Gastrocnemius medialis (tissue), 4 donors: ENCODE measurements at regions of chr6 and their contacts with region 1.

Region 1: DNA sequence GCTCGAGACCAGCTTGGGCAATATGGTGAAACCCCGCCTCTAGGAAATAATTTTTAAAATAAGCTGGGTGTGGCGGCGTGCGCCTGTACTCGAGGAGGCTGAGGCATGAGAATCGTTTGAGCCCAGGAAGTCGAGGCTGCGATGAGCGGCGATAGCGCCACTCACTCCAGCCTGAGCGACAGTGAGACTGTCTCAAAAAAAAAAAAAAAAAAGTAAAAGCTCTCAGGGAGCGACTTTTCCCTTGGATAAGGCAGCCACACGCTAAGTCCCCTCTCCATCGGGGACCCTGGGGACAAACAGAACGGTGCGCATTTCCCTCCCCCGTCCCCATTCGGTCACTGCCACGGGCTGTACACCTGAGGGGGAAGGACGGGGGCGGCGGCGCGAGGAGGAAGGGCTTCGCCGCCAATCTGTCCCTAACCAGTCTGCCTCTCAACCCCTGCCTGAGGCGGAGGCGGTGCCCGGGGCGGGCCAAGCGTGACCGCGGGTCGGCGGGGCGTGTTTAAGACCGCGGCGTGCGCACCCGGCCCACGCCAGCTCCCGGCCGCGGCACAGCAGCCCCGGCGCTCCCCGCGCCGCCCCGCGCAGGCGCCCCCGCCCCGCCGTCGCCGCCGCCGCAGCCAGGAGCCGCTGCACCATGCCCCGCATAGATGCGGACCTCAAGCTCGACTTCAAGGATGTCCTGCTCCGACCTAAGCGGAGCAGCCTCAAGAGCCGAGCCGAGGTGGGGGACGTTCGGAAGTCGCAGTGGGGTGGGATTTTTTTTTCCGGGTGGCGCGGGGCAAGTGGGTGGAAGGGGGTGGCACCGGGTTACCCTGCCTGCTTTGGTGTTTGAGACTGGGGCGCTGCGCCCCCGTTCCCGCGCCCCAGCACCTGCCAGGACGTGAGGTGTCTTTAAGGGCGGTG is at the start of gene GMPR:
- DNase-seq: peak; percentile 81 to 91
- ATAC-seq: peak; percentile 28 to 39
- H3K4me3 ChIP-seq: peak within 1 kb of the TSS; percentile 71 to 88 (median 81)
- H3K27ac ChIP-seq: peak within 1 kb of the TSS; percentile 97 to 99 (median 98)
- H3K4me1 ChIP-seq: peaks cover 46 to 49% of the 10 kb centered on the region in 2 donors
- H3K27me3 ChIP-seq: no peaks in the 10 kb centered on the region
- CTCF ChIP-seq: peak in 2 of 5 experiments; percentile 22 to 32
- POLR2A ChIP-seq: peak; percentile 79 to 87
- total RNA-seq, gene GMPR: 109 to 266 (median 239) TPM

Region 2: DNA sequence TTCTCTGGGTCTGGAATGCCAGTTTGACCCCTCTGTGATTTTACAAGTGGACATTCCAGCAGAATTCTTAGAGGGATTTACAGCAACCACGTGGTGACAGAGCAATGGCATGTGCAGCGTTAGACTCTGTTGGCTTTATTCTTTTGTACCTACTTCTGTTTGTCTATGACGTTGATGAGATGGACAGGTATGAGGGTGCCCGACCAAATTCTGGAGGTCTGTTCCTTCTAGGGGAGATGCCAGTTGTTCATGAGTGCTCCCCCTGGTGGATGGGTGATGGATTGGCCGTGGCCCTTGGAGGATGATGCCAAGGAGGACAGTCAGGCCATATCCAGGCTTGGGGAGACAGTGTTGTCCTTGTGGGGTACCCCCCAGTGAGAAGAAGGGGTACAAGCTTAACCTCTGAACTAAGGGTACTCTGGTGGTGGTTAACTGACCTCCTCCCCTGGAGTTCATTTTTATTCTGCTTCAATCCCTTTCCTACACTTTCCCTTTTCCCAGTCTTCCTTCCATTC is 774.0 kb before region 1 on chr6:
- in situ Hi-C with region 1: no loop called
- intact Hi-C with region 1: no loop called
- DNase-seq: peak in 1 of 2 donors; percentile 46
- ATAC-seq: peak in 1 of 2 donors; percentile 34
- H3K4me3 ChIP-seq: no peak overlapping the region
- H3K27ac ChIP-seq: no peak overlapping the region
- H3K4me1 ChIP-seq: peaks cover 45 to 49% of the 10 kb centered on the region in 2 donors
- H3K27me3 ChIP-seq: no peaks in the 10 kb centered on the region
- CTCF ChIP-seq: peak; percentile 34 to 74 (median 65)
- POLR2A ChIP-seq: no peak

Region 3: DNA sequence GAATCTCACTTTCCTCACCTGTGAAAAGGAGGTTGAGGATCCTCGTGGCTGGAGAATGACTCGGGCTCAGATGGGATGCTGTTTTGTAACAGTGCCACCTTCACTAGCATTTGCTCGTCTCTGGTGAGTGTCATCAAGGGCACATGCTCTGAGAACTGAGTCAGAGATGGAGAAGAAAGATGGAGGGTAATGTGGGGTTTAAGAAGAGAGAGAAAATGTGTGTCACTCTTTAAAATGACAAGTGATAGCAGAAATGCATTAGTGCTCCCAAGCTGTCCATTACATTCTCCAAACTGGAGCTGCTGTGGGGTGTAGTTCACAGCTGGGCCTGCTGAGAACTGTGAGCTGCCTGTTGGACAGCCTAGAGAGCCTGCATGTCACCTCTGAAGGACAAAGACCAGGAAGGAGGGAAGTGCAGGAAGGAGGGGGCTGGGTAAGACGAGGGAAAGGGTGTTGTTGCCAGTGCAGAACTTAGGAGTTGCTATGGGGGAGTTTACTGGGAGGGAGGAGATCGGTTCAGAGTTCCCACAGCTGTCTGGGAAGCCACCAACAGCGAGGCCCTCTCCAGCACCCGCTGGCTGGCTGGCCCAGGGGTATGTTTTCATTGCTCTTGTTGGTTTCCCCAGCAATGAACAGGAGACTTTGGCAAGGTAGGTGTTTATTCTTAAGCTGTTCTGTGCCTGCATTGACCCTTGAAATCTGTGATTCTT is 19.8 kb after region 1 on chr6:
- in situ Hi-C with region 1: no loop called
- intact Hi-C with region 1: loop called (anchors 2 kb)
- DNase-seq: peak in 1 of 2 donors; percentile 52
- ATAC-seq: peak; percentile 74 to 79
- H3K4me3 ChIP-seq: no peak overlapping the region
- H3K27ac ChIP-seq: peak overlapping the region; percentile 70 to 81 (median 76)
- H3K4me1 ChIP-seq: peaks cover 33 to 54% of the 10 kb centered on the region in 2 donors
- H3K27me3 ChIP-seq: no peaks in the 10 kb centered on the region
- CTCF ChIP-seq: no peak
- POLR2A ChIP-seq: peak in 1 of 2 donors; percentile 5

Region 4: DNA sequence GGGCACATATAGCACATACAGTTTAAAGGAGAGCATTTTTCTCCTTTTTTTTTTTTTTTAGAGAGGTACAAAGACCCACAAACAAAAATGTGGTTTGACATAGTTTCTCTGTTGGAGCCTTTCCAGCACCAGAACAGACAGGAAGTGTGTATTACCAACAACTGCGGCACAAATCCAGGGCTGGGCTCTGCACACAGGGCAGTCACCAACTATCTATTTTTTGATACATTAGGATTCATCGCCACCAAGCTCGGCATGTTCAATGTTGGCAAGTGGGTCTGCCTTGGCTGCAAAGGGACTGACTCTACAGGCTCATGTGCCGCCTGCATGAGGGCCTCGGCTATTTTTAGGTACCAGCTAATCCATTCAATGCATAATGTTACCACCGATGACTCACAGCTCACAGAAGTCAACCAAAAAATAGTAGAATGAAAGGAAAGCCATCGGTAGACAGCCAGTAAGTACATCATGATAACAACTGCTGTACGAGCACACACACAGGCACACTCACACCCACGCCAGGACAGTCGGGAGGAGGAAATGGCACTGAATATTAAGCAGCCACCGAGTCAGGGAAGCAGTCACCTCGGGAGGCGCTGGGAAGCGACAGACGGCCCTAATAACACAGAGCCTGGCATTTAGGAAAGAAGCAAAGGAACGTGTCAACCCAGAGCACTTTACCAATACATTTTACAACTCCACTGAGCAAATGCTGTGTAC is 81.7 kb after region 1 on chr6:
- in situ Hi-C with region 1: loop called in 2 of 4 experiments (anchors 5 to 10 kb)
- intact Hi-C with region 1: loop called (anchors 2 kb)
- DNase-seq: peak; percentile 92 to 96
- ATAC-seq: peak; percentile 73 to 74
- H3K4me3 ChIP-seq: peak overlapping the region; percentile 36 to 55 (median 50)
- H3K27ac ChIP-seq: peak overlapping the region; percentile 93 to 100 (median 96)
- H3K4me1 ChIP-seq: peaks cover 69 to 84% of the 10 kb centered on the region in 2 donors
- H3K27me3 ChIP-seq: no peaks in the 10 kb centered on the region
- CTCF ChIP-seq: no peak
- POLR2A ChIP-seq: peak in 1 of 2 donors; percentile 61

Region 5: DNA sequence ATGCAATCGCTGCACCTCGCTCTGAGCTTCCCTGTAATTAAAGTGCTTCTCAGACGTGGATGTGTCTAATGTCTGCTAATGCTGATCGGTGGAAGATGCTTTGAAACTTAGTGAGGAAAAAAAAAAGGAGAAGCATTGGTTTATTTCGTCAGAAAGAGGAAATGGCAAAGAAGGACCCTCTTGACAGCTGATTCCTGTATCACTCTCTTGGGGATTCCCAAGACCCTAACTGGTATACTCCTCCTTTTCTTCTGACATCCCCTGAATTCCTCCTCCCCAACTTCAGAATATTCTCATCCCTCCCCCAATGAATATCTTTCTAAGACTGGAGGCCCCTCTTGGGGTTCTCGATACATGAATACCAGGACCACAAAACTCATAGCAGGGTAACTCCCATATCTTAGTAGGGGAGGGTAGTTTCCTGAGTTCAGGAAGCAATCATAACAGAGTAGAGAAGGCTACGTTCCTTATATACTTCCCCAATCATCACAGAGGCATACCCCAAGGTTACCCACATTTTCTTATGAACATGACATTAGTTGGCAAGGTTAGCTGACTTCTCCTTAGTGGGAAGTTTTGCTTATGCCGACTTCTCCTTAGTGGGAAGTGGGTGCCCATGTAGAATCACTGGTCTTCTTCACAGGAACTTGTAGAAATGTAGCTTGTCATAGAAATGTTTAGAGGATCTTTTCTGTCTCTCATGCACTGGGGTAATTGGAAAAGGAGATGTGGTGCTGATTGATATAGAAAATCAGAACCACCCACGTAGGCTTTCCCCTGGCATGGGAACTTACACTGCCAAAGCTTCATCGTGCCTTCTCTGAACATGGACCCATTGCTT is 586.8 kb after region 1 on chr6:
- in situ Hi-C with region 1: no loop called
- intact Hi-C with region 1: no loop called
- DNase-seq: no peak
- ATAC-seq: no peak
- H3K4me3 ChIP-seq: no peak overlapping the region
- H3K27ac ChIP-seq: no peak overlapping the region
- H3K4me1 ChIP-seq: no peaks in the 10 kb centered on the region
- H3K27me3 ChIP-seq: no peaks in the 10 kb centered on the region
- CTCF ChIP-seq: no peak
- POLR2A ChIP-seq: no peak